Breast epithelium (tissue), 4 donors: ENCODE measurements at regions of chr17 and their contacts with region 1.

Region 1: DNA sequence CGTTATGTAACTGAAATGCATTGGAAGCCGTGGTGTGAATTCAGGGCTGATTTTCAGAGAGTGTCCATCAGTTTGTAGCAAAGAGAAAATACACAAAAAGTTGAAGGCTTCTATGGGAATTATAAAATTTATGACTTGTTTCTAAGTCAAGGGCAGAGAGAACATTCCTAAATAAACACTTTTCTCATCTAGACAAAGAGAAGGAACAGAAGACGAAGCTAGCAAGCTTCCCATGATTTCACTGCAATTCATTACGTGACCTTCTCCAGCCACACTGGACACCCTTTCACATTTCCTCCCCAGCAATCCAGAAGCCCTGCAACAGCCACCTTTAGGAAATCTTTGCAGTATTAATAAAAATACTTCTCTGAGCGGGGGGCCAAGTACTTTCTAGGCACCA is 67.8 kb downstream of the TMEM100 start:
- DNase-seq: no peak
- H3K4me3 ChIP-seq: no peak overlapping the region
- H3K27ac ChIP-seq: no peak overlapping the region
- H3K4me1 ChIP-seq: no peaks in the 10 kb centered on the region
- H3K27me3 ChIP-seq: no peaks in the 10 kb centered on the region
- CTCF ChIP-seq: no peak
- POLR2A ChIP-seq: no peak

Region 2: DNA sequence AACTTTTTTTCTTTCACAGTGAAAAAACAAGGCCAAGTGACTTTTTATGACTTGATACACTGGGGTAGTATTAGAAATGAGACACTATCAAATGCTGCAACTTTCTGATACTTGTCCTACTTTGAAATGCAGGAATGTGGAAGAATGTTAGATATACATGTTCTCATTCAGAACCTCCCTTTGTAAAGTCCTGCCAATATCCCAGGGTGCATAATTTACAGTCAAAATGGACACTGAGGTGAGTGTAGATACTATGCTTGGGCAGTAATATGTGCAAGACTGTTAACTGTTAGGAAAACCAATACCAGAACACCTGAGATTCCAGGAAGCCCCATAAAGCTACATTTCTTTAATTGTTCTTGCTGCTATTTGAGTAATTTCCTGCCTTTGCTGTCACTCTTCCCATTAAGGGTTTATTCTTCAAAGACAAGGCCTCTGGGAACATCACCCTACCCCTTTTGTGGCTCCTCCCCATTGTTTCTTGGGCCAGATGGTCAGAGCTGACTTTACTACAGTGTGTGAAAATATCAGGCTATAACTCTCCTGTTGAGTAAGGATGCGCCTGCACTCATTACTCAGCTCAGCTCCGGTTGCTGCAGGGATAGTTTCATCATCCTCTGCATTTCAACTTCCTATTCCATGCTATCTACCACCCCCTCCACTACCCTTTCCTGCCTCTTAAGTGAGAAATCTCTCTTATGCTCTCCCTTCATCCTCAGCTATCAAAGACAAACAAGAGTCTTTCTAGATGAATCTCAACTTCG is 19.1 kb after region 1 on chr17:
- intact Hi-C with region 1: no loop called
- DNase-seq: no peak
- H3K4me3 ChIP-seq: no peak overlapping the region
- H3K27ac ChIP-seq: peak overlapping the region in 1 of 2 donors; percentile 36
- H3K4me1 ChIP-seq: no peaks in the 10 kb centered on the region
- H3K27me3 ChIP-seq: no peaks in the 10 kb centered on the region
- CTCF ChIP-seq: no peak
- POLR2A ChIP-seq: no peak

Region 3: GRCh38 chr17:55699181-55699860 is 44.5 kb after region 1 on chr17:
- intact Hi-C with region 1: loop called (anchors 5 kb)
- DNase-seq: no peak
- H3K4me3 ChIP-seq: no peak overlapping the region
- H3K27ac ChIP-seq: no peak overlapping the region
- H3K4me1 ChIP-seq: no peaks in the 10 kb centered on the region
- H3K27me3 ChIP-seq: no peaks in the 10 kb centered on the region
- CTCF ChIP-seq: no peak
- POLR2A ChIP-seq: no peak